ENCODE measurements at regions of chr18 and their contacts with region 1.

Region 1: GRCh38 chr18:61635901-61636528 is 256.8 kb downstream of the RNF152 start:
- DNase-seq: peak; percentile 61
- H3K4me3 Mint-ChIP-seq: peak overlapping the region; percentile 1
- H3K27ac Mint-ChIP-seq: peak overlapping the region; percentile 2
- H3K4me1 Mint-ChIP-seq: peaks cover 7% of the 10 kb centered on the region
- H3K27me3 Mint-ChIP-seq: no peaks in the 10 kb centered on the region
- CTCF ChIP-seq: peak; percentile 66

Region 2: DNA sequence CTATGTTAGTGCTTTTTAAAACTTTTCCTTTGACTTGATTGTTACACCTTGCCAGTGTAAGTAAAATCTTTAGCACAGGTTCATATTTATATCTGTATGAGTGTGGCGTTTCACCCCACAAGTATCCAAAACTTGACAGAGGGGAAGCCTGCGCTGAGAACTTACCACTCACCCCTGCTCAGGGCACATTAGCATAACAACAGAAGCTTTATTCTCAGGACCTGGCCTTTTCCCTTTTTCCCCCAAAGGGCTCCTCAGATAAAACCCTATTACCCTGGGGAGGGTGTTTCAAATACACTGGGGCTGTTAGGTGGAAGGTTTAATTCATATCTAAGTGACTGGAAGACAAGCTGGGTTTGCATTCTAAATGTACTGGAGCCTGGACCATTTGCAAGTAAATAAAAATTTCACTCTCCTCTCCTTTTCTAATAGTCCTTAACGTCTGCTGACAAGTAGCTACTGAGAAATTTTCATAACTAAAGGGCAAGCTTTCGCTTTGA is 19.9 kb before region 1 on chr18:
- CTCF ChIA-PET with region 1: interaction called, 10 read pairs
- POLR2A ChIA-PET with region 1: no interaction called
- intact Hi-C with region 1: no loop called
- DNase-seq: no peak
- H3K4me3 Mint-ChIP-seq: no peak overlapping the region
- H3K27ac Mint-ChIP-seq: no peak overlapping the region
- H3K4me1 Mint-ChIP-seq: peaks cover 9% of the 10 kb centered on the region
- H3K27me3 Mint-ChIP-seq: no peaks in the 10 kb centered on the region
- CTCF ChIP-seq: no peak

Region 3: DNA sequence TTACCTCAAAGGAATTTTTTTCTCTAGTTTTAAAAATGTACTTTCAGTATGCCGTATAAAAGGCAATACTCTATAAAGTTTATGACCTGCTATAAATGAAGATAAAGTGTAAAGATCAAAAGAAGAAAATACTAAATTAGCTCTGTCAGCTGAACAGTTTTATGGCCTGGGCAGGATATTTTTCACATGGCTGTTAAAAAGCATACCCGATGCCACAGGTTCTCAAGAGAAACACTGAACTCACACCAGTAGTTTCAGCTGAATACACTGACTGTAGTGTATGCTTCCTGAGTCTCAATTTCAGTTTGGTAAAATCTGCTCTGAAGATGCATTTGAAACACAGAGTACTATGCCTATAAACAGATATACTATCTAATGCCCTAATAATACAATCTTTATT is 424.8 kb after region 1 on chr18:
- CTCF ChIA-PET with region 1: no interaction called
- POLR2A ChIA-PET with region 1: no interaction called
- intact Hi-C with region 1: no loop called
- DNase-seq: no peak
- H3K4me3 Mint-ChIP-seq: no peak overlapping the region
- H3K27ac Mint-ChIP-seq: no peak overlapping the region
- H3K4me1 Mint-ChIP-seq: no peaks in the 10 kb centered on the region
- H3K27me3 Mint-ChIP-seq: no peaks in the 10 kb centered on the region
- CTCF ChIP-seq: no peak